ENCODE measurements at regions of chr19 and their contacts with region 1.

Region 1: GRCh38 chr19:54448774-54449700 is at the start of gene LENG8:
- DNase-seq: peak; percentile 98 to 100
- ATAC-seq: peak; percentile 91 to 93
- H3K4me3 ChIP-seq: peak within 1 kb of the TSS; percentile 69
- H3K27ac ChIP-seq: peak within 1 kb of the TSS; percentile 92 to 95
- H3K4me1 ChIP-seq: peaks cover 25% of the 10 kb centered on the region
- CTCF ChIP-seq: no peak
- EP300 ChIP-seq: no peak
- POLR2A ChIP-seq: peak; percentile 97
- RAD21 ChIP-seq: no peak
- polyA plus RNA-seq, gene LENG8: 30.6 and 52.8 TPM in 2 replicates

Region 2: GRCh38 chr19:54430306-54431254 is 18.5 kb before region 1 on chr19:
- CTCF ChIA-PET with region 1: interaction called, 30 read pairs
- POLR2A ChIA-PET with region 1: interaction called, 11 read pairs
- DNase-seq: peak in 1 of 2 experiments; percentile 66
- ATAC-seq: peak; percentile 65 to 83
- H3K4me3 ChIP-seq: peak overlapping the region; percentile 43
- H3K27ac ChIP-seq: peak overlapping the region; percentile 3 to 65; a peak in 4 of 6 replicates
- H3K4me1 ChIP-seq: peaks cover 24% of the 10 kb centered on the region
- CTCF ChIP-seq: peak; percentile 43
- EP300 ChIP-seq: no peak
- POLR2A ChIP-seq: no peak
- RAD21 ChIP-seq: peak; percentile 31 to 42; a peak in 3 of 5 replicates

Region 3: DNA sequence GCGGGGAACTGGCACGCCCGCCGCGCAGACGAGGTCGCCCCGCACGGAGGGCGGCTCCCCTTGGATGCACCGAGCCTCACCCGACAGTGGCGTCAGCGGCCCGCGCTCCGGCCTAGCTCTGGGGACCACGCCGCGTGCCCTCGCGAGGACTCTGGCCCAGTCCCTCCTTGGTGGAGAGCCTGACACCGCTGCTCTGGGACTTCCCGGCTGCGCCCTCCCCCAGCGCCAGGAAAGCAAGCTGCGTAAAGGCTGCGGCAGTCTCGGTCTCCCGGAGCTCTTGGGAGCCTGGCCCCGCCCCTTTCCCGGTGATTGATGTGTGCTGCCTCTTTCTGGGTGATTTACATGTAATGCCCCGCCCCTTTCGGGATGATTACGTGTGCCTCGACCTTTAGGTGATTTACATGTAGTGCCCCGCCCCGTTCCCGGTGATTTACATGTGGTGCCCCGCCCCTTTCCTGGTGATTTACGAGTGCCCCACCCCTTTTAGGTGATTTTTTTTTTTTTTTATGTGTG is 14.6 kb after region 1 on chr19 and contains the start of gene LENG9:
- CTCF ChIA-PET with region 1: interaction called, 19 read pairs
- POLR2A ChIA-PET with region 1: interaction called, 130 read pairs
- DNase-seq: peak; percentile 91 to 100
- ATAC-seq: peak; percentile 40 to 67
- H3K4me3 ChIP-seq: peak within 1 kb of the TSS; percentile 67
- H3K27ac ChIP-seq: peak within 1 kb of the TSS; percentile 93 to 95
- H3K4me1 ChIP-seq: peaks cover 32% of the 10 kb centered on the region
- CTCF ChIP-seq: no peak
- EP300 ChIP-seq: no peak
- POLR2A ChIP-seq: peak; percentile 88
- RAD21 ChIP-seq: no peak
- polyA plus RNA-seq, gene LENG9: 1.9 and 2.1 TPM in 2 replicates

Measured in A549 (cell line).